ENCODE measurements at regions of chr15 and their contacts with region 1.

Region 1: DNA sequence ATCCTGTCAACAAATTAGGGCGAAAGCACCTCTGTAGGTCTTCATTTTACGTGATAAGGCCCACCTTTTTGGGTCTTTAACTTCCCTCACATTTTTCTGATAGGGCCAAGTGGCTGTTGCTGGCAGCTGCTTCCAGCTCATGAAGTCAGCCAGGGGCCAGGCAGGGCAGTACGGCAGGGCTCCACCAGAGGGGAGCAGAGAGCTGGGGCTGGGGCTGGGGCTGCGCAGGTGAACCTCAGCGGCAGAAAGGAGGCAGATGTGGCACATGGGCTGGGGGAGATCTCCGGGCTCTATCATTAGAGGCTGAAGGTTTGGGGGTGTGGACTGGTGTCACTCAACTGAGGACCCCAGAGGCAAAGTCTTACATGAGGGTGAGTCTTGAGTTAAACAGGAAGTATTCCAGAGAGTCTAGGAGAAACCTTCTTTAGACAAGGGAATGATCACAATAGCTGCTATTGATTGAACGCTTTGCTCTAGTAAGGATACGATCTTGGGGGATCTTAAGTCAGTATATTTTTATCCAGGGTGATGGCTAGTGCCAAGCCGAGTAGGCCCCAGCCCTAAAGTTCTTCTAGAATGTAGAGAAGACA is 62.8 kb upstream of the MEX3B start:
- DNase-seq: peak; percentile 50
- ATAC-seq: peak; percentile 94
- H3K4me3 ChIP-seq: no peak overlapping the region
- H3K27ac ChIP-seq: no peak overlapping the region
- H3K4me1 ChIP-seq: peaks cover 4% of the 10 kb centered on the region; the same call in 1 of the 2 replicates
- H3K27me3 ChIP-seq: no peaks in the 10 kb centered on the region
- CTCF ChIP-seq: peak; percentile 89
- POLR2A ChIP-seq: peak; percentile 29; the same call in 1 of the 2 replicates
- RAD21 ChIP-seq: peak; percentile 94

Region 2: GRCh38 chr15:81410318-81410753 is 698.2 kb before region 1 on chr15:
- CTCF ChIA-PET with region 1: interaction called, 5 read pairs
- POLR2A ChIA-PET with region 1: no interaction called
- dilution Hi-C with region 1: no loop called
- in situ Hi-C with region 1: no loop called
- intact Hi-C with region 1: loop called (anchors 5 kb)
- DNase-seq: peak; percentile 74
- ATAC-seq: peak; percentile 80
- H3K4me3 ChIP-seq: no peak overlapping the region
- H3K27ac ChIP-seq: no peak overlapping the region
- H3K4me1 ChIP-seq: no peaks in the 10 kb centered on the region
- H3K27me3 ChIP-seq: peaks cover 14% of the 10 kb centered on the region
- CTCF ChIP-seq: peak; percentile 68
- POLR2A ChIP-seq: no peak
- RAD21 ChIP-seq: peak; percentile 81

Region 3: DNA sequence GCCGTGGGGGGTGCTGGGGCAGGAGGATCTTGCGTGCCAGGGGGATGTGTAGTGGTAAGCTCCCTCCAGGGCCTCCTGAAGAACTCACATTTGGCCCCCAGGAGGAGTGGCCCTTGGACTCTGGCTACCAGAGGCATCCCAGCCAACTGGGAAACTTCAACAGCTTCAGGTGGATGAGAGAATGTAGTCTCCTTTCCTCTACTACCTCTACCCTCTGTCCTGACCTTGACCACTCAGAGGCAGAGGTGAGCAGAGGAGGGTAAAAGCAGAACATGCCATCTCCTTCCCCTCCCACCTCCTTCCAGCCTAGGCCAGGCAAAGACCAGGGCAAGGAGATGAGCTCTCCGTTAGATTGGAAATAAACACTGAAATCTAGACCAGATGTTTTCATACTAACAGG is 13.5 kb before region 1 on chr15:
- CTCF ChIA-PET with region 1: interaction called, 10 read pairs
- POLR2A ChIA-PET with region 1: no interaction called
- dilution Hi-C with region 1: no loop called
- in situ Hi-C with region 1: no loop called
- intact Hi-C with region 1: no loop called
- DNase-seq: no peak
- ATAC-seq: no peak
- H3K4me3 ChIP-seq: no peak overlapping the region
- H3K27ac ChIP-seq: no peak overlapping the region
- H3K4me1 ChIP-seq: peaks cover 6% of the 10 kb centered on the region; the same call in 1 of the 2 replicates
- H3K27me3 ChIP-seq: no peaks in the 10 kb centered on the region
- CTCF ChIP-seq: no peak
- POLR2A ChIP-seq: no peak
- RAD21 ChIP-seq: no peak

Region 4: GRCh38 chr15:82139823-82140268 is 31.3 kb after region 1 on chr15:
- CTCF ChIA-PET with region 1: interaction called, 16 read pairs
- POLR2A ChIA-PET with region 1: no interaction called
- dilution Hi-C with region 1: no loop called
- in situ Hi-C with region 1: no loop called
- intact Hi-C with region 1: loop called (anchors 1 kb)
- DNase-seq: peak; percentile 70
- ATAC-seq: peak; percentile 71
- H3K4me3 ChIP-seq: no peak overlapping the region
- H3K27ac ChIP-seq: no peak overlapping the region
- H3K4me1 ChIP-seq: peaks cover 11% of the 10 kb centered on the region
- H3K27me3 ChIP-seq: no peaks in the 10 kb centered on the region
- CTCF ChIP-seq: peak; percentile 77
- POLR2A ChIP-seq: no peak
- RAD21 ChIP-seq: peak; percentile 65

Measured in IMR-90 (cell line).